ENCODE measurements at regions of chr14 and their contacts with region 1.

Region 1: GRCh38 chr14:69818757-69819191 is 21.7 kb upstream of the SLC10A1 start:
- DNase-seq: peak in 1 of 2 donors; percentile 24
- H3K4me3 ChIP-seq: no peak overlapping the region
- H3K27ac ChIP-seq: no peak overlapping the region
- H3K4me1 ChIP-seq: no peaks in the 10 kb centered on the region
- H3K27me3 ChIP-seq: no peaks in the 10 kb centered on the region
- CTCF ChIP-seq: peak; percentile 83 to 91 (median 89)
- POLR2A ChIP-seq: no peak

Region 2: DNA sequence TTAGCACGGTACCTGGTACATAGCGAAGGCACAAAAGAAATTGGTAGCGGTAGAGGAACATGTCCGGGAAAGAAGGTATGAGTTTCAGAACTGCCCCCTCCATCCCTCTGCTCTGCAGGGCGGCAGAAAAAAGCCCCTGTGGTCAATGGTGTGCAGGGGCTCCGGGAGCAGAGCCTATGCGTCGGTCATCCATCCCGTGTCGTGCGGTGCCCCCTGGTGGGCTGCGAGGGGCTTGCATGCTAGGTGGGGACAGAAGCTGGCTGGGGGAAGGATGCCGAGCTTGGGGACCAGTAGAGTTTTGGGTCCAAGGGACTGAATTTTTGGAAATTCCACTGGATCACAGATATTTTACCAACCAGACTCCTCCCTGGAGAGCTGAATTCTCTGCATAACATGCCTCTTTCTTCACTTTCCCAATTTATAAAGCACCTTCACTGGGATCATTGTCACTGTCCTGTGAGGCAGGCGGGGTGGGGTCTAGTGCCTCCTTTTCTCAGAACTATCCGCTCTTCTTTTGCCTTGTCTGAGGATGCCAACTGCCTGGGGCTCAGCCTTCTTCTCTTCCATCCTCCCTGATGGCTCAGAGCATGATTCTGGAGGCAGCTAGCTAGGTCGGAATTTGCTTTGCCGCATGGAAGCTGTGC is 209.1 kb after region 1 on chr14:
- intact Hi-C with region 1: loop called (anchors 10 kb)
- DNase-seq: peak; percentile 58 to 75
- H3K4me3 ChIP-seq: no peak overlapping the region
- H3K27ac ChIP-seq: no peak overlapping the region
- H3K4me1 ChIP-seq: no peaks in the 10 kb centered on the region
- H3K27me3 ChIP-seq: no peaks in the 10 kb centered on the region
- CTCF ChIP-seq: peak; percentile 77 to 89 (median 89)
- POLR2A ChIP-seq: no peak

Measured in breast epithelium (tissue), 4 donors.